Activated B cell treated with CpG ODN at 0.5 μM for 24 hours (primary cell): ENCODE measurements at regions of chr17 and their contacts with region 1.

Region 1: GRCh38 chr17:45148183-45149036 is at the start of gene HEXIM1:
- DNase-seq: peak; percentile 97
- ATAC-seq: peak; percentile 74
- H3K4me3 Mint-ChIP-seq: peak within 1 kb of the TSS; percentile 96
- H3K27ac Mint-ChIP-seq: peak within 1 kb of the TSS; percentile 100
- H3K4me1 Mint-ChIP-seq: peaks cover 61% of the 10 kb centered on the region
- H3K27me3 Mint-ChIP-seq: no peaks in the 10 kb centered on the region
- CTCF ChIP-seq: no peak
- total RNA-seq, gene HEXIM1: 19.5 and 21.5 TPM in 2 replicates

Region 2: GRCh38 chr17:44899069-44899782 is 249.2 kb before region 1 on chr17 and contains the start of gene EFTUD2:
- CTCF ChIA-PET with region 1: no interaction called
- POLR2A ChIA-PET with region 1: interaction called, 17 read pairs
- intact Hi-C with region 1: no loop called
- DNase-seq: peak; percentile 94
- ATAC-seq: peak; percentile 93
- H3K4me3 Mint-ChIP-seq: peak within 1 kb of the TSS; percentile 96
- H3K27ac Mint-ChIP-seq: peak within 1 kb of the TSS; percentile 99
- H3K4me1 Mint-ChIP-seq: peaks cover 31% of the 10 kb centered on the region
- H3K27me3 Mint-ChIP-seq: peaks cover 4% of the 10 kb centered on the region
- CTCF ChIP-seq: no peak
- total RNA-seq, gene EFTUD2: 168 and 192 TPM in 2 replicates

Region 3: DNA sequence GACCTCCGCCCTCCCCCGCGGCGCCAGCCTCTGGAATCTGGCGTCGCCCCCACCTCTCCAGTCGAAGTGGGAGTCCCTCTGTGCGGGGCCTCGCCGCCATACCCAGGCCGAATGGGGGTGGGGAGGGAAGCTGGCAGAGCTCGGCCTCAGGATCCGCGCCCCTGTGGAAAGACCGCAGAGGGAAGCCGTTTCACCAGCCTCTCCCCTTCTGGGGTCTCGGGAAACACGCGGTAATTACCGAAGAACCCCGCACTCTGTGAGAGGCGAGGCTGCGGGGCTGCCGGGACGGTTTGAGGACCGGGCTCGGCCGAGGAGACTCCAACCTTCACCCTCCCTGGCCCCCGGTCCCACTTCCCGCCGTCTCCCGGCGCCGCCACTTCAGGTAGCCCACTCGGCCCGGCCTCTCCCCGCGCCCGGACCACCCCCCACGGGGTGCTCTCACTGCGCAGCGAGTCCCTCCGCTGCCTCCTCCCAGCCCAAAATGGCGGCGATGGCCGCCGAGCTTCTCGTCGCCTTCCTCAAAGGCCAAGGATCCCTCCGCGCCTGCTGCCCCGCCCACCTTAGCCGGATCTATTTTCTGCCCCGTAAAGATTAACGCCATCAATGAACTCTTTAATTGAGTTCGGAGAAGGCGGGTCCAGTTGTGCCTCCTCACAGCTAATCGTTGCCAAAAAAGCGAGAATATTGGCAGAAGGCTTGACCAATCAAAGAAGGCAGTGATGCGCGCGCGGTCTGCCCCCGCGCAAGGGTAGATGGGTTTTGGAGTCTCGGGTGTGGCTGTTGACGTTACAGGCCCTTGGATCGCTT is 12.8 kb after region 1 on chr17:
- CTCF ChIA-PET with region 1: interaction called, 86 read pairs
- POLR2A ChIA-PET with region 1: interaction called, 703 read pairs
- intact Hi-C with region 1: loop called (anchors 1 kb)
- DNase-seq: peak; percentile 98
- ATAC-seq: peak; percentile 93
- H3K4me3 Mint-ChIP-seq: peak overlapping the region; percentile 99
- H3K27ac Mint-ChIP-seq: peak overlapping the region; percentile 99
- H3K4me1 Mint-ChIP-seq: peaks cover 42% of the 10 kb centered on the region
- H3K27me3 Mint-ChIP-seq: no peaks in the 10 kb centered on the region
- CTCF ChIP-seq: no peak

Region 4: DNA sequence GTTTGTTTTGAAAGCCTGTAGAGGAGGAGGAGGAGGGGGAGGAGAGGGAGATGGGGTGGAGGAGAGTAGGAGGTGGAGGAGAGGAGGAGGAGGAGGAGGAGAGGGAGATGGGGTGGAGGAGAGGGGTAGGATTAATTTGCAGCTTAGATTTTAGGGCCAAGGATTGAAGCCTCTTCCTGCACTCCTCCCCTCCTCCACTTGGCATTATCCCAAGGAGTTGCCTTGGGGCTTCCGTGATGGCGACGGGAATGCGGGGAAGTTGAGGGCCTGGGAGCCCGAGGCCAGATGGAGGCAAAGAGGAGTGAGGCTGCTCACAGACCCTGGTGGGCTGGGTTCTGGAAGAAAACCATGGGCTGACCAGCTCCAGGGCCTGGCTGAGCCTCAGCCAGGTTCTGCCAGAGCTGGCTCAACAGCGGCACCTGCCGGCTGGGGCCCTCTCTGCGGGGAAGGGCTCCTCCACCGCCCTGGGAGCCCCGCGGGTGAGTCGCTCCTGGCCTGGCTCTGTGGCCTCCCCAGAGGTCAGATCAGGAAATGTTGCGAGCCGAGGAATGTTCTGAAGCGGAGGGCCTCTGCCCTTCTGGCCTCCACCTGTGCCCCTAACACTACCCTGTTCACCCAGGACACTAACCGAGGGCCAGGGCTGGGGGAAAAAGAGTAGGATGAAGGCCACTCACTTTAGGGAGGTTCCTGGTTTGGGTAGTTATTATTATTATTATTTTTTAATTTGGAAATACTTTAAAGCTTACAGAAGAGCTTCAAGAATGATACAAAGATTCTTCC is 49.3 kb after region 1 on chr17:
- CTCF ChIA-PET with region 1: interaction called, 114 read pairs
- POLR2A ChIA-PET with region 1: interaction called, 46 read pairs
- intact Hi-C with region 1: loop called (anchors 1 kb)
- DNase-seq: peak; percentile 91
- ATAC-seq: peak; percentile 100
- H3K4me3 Mint-ChIP-seq: no peak overlapping the region
- H3K27ac Mint-ChIP-seq: no peak overlapping the region
- H3K4me1 Mint-ChIP-seq: peaks cover 4% of the 10 kb centered on the region
- H3K27me3 Mint-ChIP-seq: no peaks in the 10 kb centered on the region
- CTCF ChIP-seq: no peak

Region 5: GRCh38 chr17:45247429-45248131 is 99.2 kb after region 1 on chr17:
- CTCF ChIA-PET with region 1: interaction called, 3 read pairs
- POLR2A ChIA-PET with region 1: interaction called, 16 read pairs
- intact Hi-C with region 1: loop called (anchors 1 kb)
- DNase-seq: peak; percentile 87
- ATAC-seq: peak; percentile 92
- H3K4me3 Mint-ChIP-seq: peak overlapping the region; percentile 90
- H3K27ac Mint-ChIP-seq: peak overlapping the region; percentile 92
- H3K4me1 Mint-ChIP-seq: peaks cover 34% of the 10 kb centered on the region
- H3K27me3 Mint-ChIP-seq: no peaks in the 10 kb centered on the region
- CTCF ChIP-seq: no peak